Caco-2 (cell line): ENCODE measurements at regions of chr14 and their contacts with region 1.

Region 1: GRCh38 chr14:61388173-61388975 is 67.0 kb downstream of the PRKCH start:
- DNase-seq: peak; percentile 33 to 49
- H3K4me3 ChIP-seq: no peak overlapping the region
- H3K4me3 Mint-ChIP-seq: no peak overlapping the region
- H3K27ac Mint-ChIP-seq: no peak overlapping the region
- H3K4me1 ChIP-seq: peaks cover 18% of the 10 kb centered on the region
- H3K4me1 Mint-ChIP-seq: peaks cover 8% of the 10 kb centered on the region
- H3K27me3 ChIP-seq: no peaks in the 10 kb centered on the region
- H3K27me3 Mint-ChIP-seq: no peaks in the 10 kb centered on the region
- CTCF ChIP-seq: no peak

Region 2: DNA sequence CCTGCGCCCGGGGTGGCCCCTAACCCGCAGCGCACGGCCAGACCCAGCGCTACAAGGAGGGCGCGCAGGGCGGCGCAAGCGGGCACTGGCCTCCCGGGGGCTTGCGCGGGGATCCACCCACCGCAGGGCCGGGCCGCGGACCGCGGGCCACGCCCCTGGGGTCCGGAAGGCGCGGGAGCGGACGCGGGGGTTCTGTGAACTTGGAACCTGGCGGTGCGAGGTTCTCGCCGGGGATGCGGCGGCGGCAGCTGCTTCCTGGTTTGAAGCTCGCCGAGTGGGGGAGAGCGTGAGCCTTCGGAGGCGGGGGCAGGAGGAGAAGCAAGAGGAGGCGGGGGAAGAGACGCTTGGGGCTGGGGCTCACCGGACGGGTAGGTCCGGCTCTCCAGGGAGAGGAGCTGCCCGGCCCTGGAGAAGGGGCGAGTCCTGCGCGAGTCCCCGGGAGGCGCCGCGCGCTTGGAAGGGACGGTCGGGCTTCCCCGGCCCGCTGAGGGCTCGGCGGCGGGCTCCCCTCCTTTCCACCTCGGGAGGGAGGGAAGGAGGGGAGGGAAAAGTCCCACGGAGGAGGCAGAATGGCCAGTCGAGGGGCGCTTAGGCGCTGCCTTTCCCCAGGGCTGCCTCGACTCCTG is 66.9 kb before region 1 on chr14 and contains the start of gene PRKCH:
- CTCF ChIA-PET with region 1: no interaction called
- POLR2A ChIA-PET with region 1: no interaction called
- intact Hi-C with region 1: loop called (anchors 5 kb)
- DNase-seq: peak; percentile 92
- H3K4me3 ChIP-seq: peak within 1 kb of the TSS; percentile 49
- H3K4me3 Mint-ChIP-seq: peak within 1 kb of the TSS; percentile 83
- H3K27ac Mint-ChIP-seq: peak within 1 kb of the TSS; percentile 71
- H3K4me1 ChIP-seq: 0 out of 2 replicates have a peak, but pooled peaks cover 3% of the 10 kb centered on the region
- H3K4me1 Mint-ChIP-seq: no peaks in the 10 kb centered on the region
- H3K27me3 ChIP-seq: no peaks in the 10 kb centered on the region
- H3K27me3 Mint-ChIP-seq: no peaks in the 10 kb centered on the region
- CTCF ChIP-seq: peak in 1 of 2 experiments; percentile 19
- total RNA-seq, gene PRKCH: 17.8 and 18.3 TPM in 2 replicates

Region 3: DNA sequence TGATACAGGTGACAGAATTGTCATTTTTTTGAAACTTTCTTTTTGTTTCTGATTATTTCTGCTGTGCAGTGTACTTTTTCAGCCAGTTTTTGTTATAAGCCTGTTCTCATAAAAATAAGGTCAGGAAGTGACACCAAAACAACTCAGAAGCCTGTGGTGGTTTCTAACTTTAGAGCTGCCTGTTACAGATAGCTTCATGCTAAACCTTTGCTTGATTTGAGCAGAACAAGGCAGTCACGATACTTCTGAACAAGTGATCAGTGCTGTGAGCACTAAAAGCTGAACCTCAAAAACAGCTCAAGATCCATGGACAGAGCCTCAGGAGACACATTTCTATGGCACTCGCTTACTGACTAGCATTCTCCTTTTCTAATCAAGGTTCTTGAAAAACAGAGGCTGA is 15.0 kb after region 1 on chr14:
- CTCF ChIA-PET with region 1: no interaction called
- POLR2A ChIA-PET with region 1: no interaction called
- intact Hi-C with region 1: no loop called
- DNase-seq: no peak
- H3K4me3 ChIP-seq: no peak overlapping the region
- H3K4me3 Mint-ChIP-seq: no peak overlapping the region
- H3K27ac Mint-ChIP-seq: no peak overlapping the region
- H3K4me1 ChIP-seq: no peaks in the 10 kb centered on the region
- H3K4me1 Mint-ChIP-seq: no peaks in the 10 kb centered on the region
- H3K27me3 ChIP-seq: no peaks in the 10 kb centered on the region; the same call in 1 of the 2 replicates
- H3K27me3 Mint-ChIP-seq: no peaks in the 10 kb centered on the region
- CTCF ChIP-seq: no peak